Activated CD4-positive, alpha-beta memory T cell treated with anti-CD3 and anti-CD28 coated beads, Interleukin-2, amount 10 ng/mL, durations not matched to agents 7 days and 5 days (primary cell): ENCODE measurements at regions of chr6 and their contacts with region 1.

Region 1: GRCh38 chr6:106608062-106608668 is 21.1 kb downstream of the RTN4IP1 start:
- DNase-seq: no peak
- H3K4me3 Mint-ChIP-seq: no peak overlapping the region
- H3K27ac Mint-ChIP-seq: no peak overlapping the region
- H3K4me1 Mint-ChIP-seq: peaks cover 15% of the 10 kb centered on the region
- H3K27me3 Mint-ChIP-seq: no peaks in the 10 kb centered on the region

Region 2: GRCh38 chr6:105740946-105741645 is 867.1 kb before region 1 on chr6:
- CTCF ChIA-PET with region 1: no interaction called
- POLR2A ChIA-PET with region 1: no interaction called
- DNase-seq: no peak
- H3K4me3 Mint-ChIP-seq: no peak overlapping the region
- H3K27ac Mint-ChIP-seq: no peak overlapping the region
- H3K4me1 Mint-ChIP-seq: peaks cover 63% of the 10 kb centered on the region
- H3K27me3 Mint-ChIP-seq: no peaks in the 10 kb centered on the region

Region 3: DNA sequence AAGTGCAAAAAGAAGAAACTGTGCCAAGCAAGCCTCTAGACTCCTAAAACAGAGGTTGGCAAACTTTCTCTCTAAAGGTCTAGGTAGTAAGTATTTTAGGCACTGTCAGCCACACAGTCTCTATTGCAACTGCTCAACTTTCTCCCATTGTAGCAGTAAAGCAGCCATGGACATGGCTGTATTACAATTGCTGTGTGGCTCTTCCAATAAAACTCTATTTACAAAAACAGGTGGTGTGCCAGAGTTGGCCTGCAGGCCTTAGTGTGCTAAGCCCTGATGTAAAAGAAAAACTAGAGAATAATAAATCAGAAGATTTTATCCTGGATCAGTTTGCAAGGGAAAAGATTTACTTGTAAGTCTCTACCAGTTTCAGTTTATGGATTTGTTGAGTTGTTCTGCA is 173.6 kb before region 1 on chr6:
- CTCF ChIA-PET with region 1: no interaction called
- POLR2A ChIA-PET with region 1: no interaction called
- DNase-seq: no peak
- H3K4me3 Mint-ChIP-seq: no peak overlapping the region
- H3K27ac Mint-ChIP-seq: no peak overlapping the region
- H3K4me1 Mint-ChIP-seq: peaks cover under 1% of the 10 kb centered on the region
- H3K27me3 Mint-ChIP-seq: peaks cover 12% of the 10 kb centered on the region

Region 4: GRCh38 chr6:106629103-106629858 is 21.1 kb after region 1 on chr6 and contains the starts of genes QRSL1 and RTN4IP1:
- CTCF ChIA-PET with region 1: interaction called, 10 read pairs
- POLR2A ChIA-PET with region 1: interaction called, 29 read pairs
- DNase-seq: peak; percentile 89
- H3K4me3 Mint-ChIP-seq: peak within 1 kb of the TSS; percentile 92
- H3K27ac Mint-ChIP-seq: peak within 1 kb of the TSS; percentile 90
- H3K4me1 Mint-ChIP-seq: peaks cover 43% of the 10 kb centered on the region
- H3K27me3 Mint-ChIP-seq: no peaks in the 10 kb centered on the region
- total RNA-seq, gene QRSL1: 11.6 to 12.2 TPM
- total RNA-seq, gene RTN4IP1: 5.8 to 7.7 TPM

Region 5: GRCh38 chr6:106637717-106638341 is 29.7 kb after region 1 on chr6:
- CTCF ChIA-PET with region 1: interaction called, 10 read pairs
- POLR2A ChIA-PET with region 1: no interaction called
- DNase-seq: no peak
- H3K4me3 Mint-ChIP-seq: no peak overlapping the region
- H3K27ac Mint-ChIP-seq: no peak overlapping the region
- H3K4me1 Mint-ChIP-seq: peaks cover 28% of the 10 kb centered on the region
- H3K27me3 Mint-ChIP-seq: no peaks in the 10 kb centered on the region

Region 6: GRCh38 chr6:106979427-106979884 is 371.3 kb after region 1 on chr6:
- CTCF ChIA-PET with region 1: interaction called, 26 read pairs
- POLR2A ChIA-PET with region 1: no interaction called
- DNase-seq: peak; percentile 82
- H3K4me3 Mint-ChIP-seq: no peak overlapping the region
- H3K27ac Mint-ChIP-seq: no peak overlapping the region
- H3K4me1 Mint-ChIP-seq: peaks cover 8% of the 10 kb centered on the region
- H3K27me3 Mint-ChIP-seq: peaks cover 40% of the 10 kb centered on the region